IMR-90 (cell line): ENCODE measurements at regions of chr13 and their contacts with region 1.

Region 1: GRCh38 chr13:27631156-27631555 is 9.5 kb downstream of the POLR1D start:
- DNase-seq: no peak
- ATAC-seq: no peak
- H3K4me3 ChIP-seq: no peak overlapping the region
- H3K27ac ChIP-seq: no peak overlapping the region
- H3K4me1 ChIP-seq: no peaks in the 10 kb centered on the region
- H3K27me3 ChIP-seq: no peaks in the 10 kb centered on the region
- CTCF ChIP-seq: no peak
- POLR2A ChIP-seq: no peak
- RAD21 ChIP-seq: no peak

Region 2: GRCh38 chr13:27578121-27579030 is 52.8 kb before region 1 on chr13:
- CTCF ChIA-PET with region 1: no interaction called
- POLR2A ChIA-PET with region 1: no interaction called
- dilution Hi-C with region 1: no loop called
- in situ Hi-C with region 1: no loop called
- intact Hi-C with region 1: loop called (anchors 1 kb)
- DNase-seq: peak; percentile 61
- ATAC-seq: peak; percentile 86
- H3K4me3 ChIP-seq: no peak overlapping the region
- H3K27ac ChIP-seq: no peak overlapping the region
- H3K4me1 ChIP-seq: peaks cover 4% of the 10 kb centered on the region
- H3K27me3 ChIP-seq: no peaks in the 10 kb centered on the region
- CTCF ChIP-seq: no peak
- POLR2A ChIP-seq: no peak
- RAD21 ChIP-seq: no peak